Esophagus muscularis mucosa (tissue), 4 donors: ENCODE measurements at regions of chr9 and their contacts with region 1.

Region 1: DNA sequence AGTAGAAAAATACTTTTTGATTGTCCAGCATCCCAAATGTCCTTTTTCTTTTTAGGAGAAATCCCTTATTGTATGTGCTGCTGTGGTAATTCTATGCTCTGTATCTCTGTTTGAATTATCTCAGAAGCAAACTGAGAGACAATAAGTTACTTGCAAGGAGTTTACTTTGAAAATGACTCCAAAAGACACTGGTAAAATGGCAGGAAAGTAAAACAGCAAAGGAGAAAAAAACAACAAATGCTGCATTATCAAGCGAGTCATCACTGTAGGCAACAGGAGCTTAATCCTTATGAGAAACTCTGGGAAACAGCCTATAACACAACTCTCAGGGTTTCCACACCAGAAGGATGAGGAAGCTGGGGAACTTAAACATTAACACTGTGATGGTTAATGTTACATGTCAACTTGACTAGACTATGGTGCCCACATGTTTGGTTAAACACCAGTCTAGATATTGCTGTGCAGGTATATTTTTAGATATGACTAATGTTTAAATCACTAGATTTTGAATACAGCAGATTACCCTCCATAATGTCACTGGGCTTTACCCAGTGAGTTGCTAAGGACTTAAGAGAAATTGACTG is 92.6 kb upstream of the GAS1 start:
- DNase-seq: no peak
- H3K4me3 ChIP-seq: no peak overlapping the region
- H3K27ac ChIP-seq: no peak overlapping the region
- H3K4me1 ChIP-seq: peaks cover 0 to 25% (median 14%) of the 10 kb centered on the region in 4 donors
- H3K27me3 ChIP-seq: no peaks in the 10 kb centered on the region
- CTCF ChIP-seq: no peak
- EP300 ChIP-seq: no peak
- POLR2A ChIP-seq: no peak

Region 2: DNA sequence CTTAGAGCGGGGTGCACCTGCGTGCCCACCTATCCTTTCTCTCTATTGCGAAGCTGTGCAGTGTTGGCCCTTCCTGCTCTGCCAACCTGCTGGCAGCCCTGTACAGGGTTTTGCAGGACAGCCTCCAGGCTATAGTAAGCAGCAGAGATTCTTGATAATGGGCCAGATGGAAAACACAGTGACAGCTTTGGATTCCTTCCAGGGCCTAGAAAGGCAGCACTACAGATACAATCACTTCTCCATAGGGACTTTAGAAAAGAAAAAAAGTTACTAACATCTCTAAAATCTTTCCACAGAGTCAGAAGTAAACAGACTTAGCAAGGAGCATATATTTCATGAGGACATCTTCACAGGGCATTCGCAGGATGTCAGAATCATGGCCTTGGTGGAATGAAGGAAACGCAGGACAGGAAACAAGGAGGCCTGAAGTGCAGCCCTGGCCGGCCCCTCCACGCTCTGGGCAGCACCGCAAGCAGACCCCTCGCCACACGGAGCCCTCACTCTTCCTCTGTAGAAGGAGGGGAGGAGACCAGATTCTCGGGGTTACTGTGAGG is 79.5 kb after region 1 on chr9:
- intact Hi-C with region 1: loop called (anchors 10 kb)
- DNase-seq: no peak
- H3K4me3 ChIP-seq: no peak overlapping the region
- H3K27ac ChIP-seq: peak overlapping the region; percentile 70 to 82 (median 76)
- H3K4me1 ChIP-seq: peaks cover 35 to 72% (median 67%) of the 10 kb centered on the region in 4 donors
- H3K27me3 ChIP-seq: no peaks in the 10 kb centered on the region
- CTCF ChIP-seq: no peak
- EP300 ChIP-seq: no peak
- POLR2A ChIP-seq: no peak

Region 3: GRCh38 chr9:87320146-87320884 is 280.4 kb after region 1 on chr9:
- intact Hi-C with region 1: no loop called
- DNase-seq: no peak
- H3K4me3 ChIP-seq: no peak overlapping the region
- H3K27ac ChIP-seq: no peak overlapping the region
- H3K4me1 ChIP-seq: peaks cover 0 to 5% (median 0%) of the 10 kb centered on the region in 4 donors
- H3K27me3 ChIP-seq: no peaks in the 10 kb centered on the region
- CTCF ChIP-seq: no peak
- EP300 ChIP-seq: no peak
- POLR2A ChIP-seq: no peak